Gastrocnemius medialis (tissue), 4 donors: ENCODE measurements at regions of chr9 and their contacts with region 1.

Region 1: DNA sequence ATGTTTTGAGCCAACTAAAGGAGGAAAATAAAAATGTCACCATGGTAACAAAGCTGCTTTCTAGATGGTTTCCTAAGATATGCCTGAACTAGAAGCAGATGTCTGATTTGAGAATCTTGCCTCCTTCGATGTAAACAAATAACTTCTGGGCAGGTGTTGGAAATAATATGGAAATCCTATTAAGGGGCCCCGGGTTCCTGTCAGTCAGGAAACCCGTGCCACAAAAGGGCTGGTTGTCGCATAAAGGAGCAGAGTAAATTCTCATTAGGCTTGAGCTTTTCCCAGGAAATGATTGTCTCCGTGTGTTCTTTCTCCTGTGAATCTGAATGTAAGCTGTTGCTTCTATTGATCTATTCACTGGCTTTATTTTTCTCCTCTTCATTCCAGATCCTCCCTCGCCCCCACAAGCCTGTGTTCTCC is 90.8 kb downstream of the TLE4 start:
- DNase-seq: no peak
- ATAC-seq: no peak
- H3K4me3 ChIP-seq: no peak overlapping the region
- H3K27ac ChIP-seq: no peak overlapping the region
- H3K4me1 ChIP-seq: peaks cover 21 to 29% of the 10 kb centered on the region in 2 donors
- H3K27me3 ChIP-seq: no peaks in the 10 kb centered on the region
- CTCF ChIP-seq: no peak
- POLR2A ChIP-seq: no peak

Region 2: DNA sequence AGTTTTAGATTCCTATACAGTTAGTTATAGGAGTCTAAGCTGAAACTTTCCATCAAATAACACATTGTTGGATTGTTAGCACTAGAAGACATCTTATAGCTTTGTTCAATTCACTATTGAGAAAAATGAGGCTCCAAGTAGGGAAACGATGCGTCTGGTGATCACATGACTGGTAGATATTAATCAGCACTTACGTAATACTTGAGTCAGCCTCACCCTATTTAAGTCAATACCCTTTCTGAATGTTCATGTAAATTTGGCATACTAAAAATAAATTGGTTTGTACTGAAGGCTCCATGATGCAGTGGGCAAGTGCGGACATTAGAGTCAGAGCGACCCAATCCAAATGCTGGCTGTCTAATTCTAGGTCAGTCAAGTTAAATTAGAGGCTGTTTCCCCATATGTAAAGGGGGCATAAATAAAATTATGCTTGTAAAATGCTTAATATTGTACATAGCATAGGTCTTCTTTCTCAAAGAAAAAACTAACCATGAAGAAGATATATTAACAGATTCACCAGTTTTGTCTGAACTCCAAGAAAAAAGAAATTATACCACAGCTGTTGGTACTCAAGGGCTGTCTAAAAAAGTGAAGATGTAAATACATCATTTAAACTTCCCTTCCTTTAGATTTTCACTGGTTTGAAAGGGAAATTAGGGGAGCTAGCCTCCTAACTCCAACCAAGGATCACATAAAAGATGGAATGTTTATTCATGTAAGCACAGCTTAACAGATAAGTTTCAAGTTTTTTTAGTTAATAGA is 497.3 kb before region 1 on chr9:
- in situ Hi-C with region 1: no loop called
- intact Hi-C with region 1: no loop called
- DNase-seq: no peak
- ATAC-seq: no peak
- H3K4me3 ChIP-seq: no peak overlapping the region
- H3K27ac ChIP-seq: no peak overlapping the region
- H3K4me1 ChIP-seq: no peaks in the 10 kb centered on the region
- H3K27me3 ChIP-seq: no peaks in the 10 kb centered on the region
- CTCF ChIP-seq: no peak
- POLR2A ChIP-seq: no peak

Region 3: DNA sequence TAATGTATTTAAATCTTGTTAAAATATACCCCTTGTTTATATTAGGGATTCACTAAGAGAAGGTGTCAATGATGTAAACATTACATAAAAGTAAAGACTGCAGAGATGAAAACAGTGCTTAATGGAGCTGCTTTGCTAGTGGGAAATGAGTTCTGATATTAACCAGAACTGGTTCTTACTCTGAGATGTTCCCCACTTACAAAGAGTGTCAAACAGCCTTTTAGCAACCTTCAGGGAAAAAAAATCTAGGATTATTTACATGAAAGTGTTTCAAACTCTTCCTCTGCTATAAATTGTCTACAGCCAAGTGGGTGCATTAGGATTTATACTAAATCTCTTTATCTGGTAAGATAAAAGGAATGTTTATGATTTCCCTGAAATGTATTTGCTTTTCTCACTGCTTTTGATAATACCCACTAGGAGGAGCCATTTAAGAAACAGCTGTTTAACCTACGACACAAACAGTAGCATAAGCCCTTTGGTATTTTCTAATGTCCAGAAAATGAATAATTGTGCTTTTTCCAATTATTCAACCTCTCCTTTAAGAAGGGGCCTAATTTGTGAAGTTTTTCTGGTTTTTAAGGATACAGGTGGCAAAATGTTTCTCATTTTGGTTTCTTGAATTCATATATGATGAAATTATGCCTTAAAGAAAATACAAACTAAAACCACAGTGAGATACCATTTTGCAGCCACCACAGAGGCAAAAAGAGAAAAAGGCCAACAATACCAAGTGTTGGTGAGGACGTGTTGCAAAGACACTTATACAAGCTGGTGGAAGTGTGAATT is 95.5 kb after region 1 on chr9:
- in situ Hi-C with region 1: loop called in 1 of 4 experiments (anchors 25 kb)
- intact Hi-C with region 1: no loop called
- DNase-seq: no peak
- ATAC-seq: no peak
- H3K4me3 ChIP-seq: no peak overlapping the region
- H3K27ac ChIP-seq: no peak overlapping the region
- H3K4me1 ChIP-seq: no peaks in the 10 kb centered on the region
- H3K27me3 ChIP-seq: no peaks in the 10 kb centered on the region
- CTCF ChIP-seq: peak in 1 of 5 experiments; percentile 27
- POLR2A ChIP-seq: no peak

Region 4: GRCh38 chr9:79955300-79955699 is 292.8 kb after region 1 on chr9:
- in situ Hi-C with region 1: no loop called
- intact Hi-C with region 1: no loop called
- DNase-seq: no peak
- ATAC-seq: no peak
- H3K4me3 ChIP-seq: no peak overlapping the region
- H3K27ac ChIP-seq: no peak overlapping the region
- H3K4me1 ChIP-seq: no peaks in the 10 kb centered on the region
- H3K27me3 ChIP-seq: no peaks in the 10 kb centered on the region
- CTCF ChIP-seq: peak in 1 of 5 experiments; percentile 14
- POLR2A ChIP-seq: no peak